Cardiac septum (tissue), 1 donor: ENCODE measurements at regions of chr7 and their contacts with region 1.

Region 1: DNA sequence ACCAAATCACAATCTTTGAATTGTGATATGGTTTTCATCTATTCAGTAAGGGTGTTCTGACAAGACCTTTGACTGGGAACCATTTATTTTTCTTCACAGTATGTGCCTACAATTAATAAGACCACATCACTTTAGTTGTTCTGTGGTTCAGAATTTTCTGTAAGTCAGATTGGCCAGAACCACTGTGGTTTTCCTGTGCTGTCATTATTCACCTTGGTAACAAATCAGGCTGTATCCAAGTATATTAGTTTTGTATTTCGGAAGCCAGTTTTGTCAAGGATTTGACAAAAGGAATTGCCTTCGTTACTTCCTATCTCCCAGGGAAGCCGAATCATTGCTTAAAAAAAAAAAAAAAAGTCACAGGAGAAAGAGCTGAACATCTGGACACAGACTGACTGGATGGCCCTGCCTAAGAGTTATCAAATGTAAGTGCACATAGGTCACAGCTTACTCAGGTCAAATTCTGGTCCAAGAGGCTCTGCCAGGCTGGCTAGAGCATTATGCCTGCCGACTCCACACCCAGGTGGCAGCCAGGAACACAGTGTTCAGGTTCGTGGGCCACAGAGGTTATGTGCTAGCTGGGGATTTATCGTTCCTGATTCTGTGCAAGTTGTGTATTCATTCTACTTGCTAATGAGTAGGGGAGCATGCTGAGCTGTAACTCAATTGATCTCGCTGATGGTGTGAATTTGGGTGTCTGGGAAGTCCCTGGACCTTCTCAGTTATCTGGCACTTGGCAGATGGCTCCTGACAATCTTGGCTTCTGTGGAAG is 175.3 kb downstream of the JAZF1 start:
- DNase-seq: no peak

Region 2: DNA sequence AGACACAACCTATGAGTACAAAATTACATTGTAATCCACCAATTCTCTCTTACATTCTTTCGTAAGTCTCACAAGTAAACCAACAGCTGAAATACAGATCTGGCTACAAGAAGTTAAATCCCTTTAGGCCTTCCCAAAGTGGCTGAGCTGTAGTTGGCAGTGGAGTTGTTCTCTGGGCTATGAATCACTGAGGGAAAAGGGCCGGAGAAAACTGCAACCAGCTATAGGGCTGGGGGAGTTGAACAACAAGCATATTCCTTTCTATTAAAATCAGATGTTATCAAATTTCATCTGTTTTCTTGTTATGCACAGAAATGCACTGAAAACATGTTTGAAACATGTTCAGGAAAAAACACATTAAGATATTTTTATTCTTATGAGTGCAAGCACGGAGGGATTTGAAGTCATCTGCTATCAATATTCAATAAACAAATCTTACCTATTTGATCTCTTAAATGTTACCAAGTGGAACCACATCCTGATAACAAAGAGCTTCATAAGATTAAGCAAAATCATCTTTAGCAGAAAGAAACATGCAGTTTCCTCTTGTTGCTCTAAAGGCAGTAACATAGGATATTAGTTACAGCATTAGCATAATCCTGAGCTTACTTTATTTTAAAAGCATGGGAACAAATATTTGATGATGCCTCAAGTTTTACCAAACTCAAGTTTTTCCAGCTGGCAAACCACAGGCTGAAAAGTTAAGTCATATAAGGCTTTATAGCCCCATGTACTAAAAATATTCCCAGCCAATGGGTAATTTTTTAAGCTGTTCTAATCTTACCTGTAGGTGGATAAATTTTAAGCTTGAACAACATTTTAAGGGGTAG is 52.6 kb before region 1 on chr7:
- intact Hi-C with region 1: loop called (anchors 5 kb)
- DNase-seq: no peak